CD8-positive, alpha-beta T cell (primary cell): ENCODE measurements at regions of chr9 and their contacts with region 1.

Region 1: DNA sequence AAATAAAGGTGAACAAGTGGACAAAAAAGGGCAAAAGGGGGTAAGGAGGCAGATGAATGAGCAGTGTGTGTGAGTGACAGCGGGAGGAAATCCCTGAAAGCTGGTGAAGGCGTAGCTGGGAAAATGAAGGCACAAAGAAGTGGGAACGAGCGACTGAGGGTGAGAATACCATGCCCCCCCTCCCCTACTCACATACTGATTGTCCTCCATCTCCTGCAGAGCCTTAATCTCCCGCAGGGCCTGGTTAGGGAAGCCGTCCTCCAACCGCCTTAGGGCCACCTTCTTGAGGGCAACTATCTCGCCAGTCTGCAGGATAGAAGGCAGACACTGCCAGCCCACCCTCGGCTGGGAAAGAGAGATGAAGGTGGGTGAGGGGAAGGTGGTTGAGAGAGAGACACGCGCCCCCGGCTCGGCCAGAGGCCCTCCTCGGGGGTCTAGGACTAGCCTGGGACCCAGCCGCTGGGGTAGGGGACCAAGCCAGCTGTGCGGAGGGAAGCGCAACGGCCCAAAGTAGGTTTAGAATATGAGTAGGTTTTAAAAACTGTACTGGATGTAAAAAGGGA is 522 bp downstream of the CDK20 start:
- DNase-seq: no peak
- ATAC-seq: no peak
- H3K4me3 ChIP-seq: peak overlapping the region; percentile 81 to 83
- H3K4me3 Mint-ChIP-seq: peak overlapping the region; percentile 97
- H3K27ac ChIP-seq: peak overlapping the region; percentile 86 to 92
- H3K27ac Mint-ChIP-seq: peak overlapping the region; percentile 99
- H3K4me1 ChIP-seq: peaks cover 10% of the 10 kb centered on the region
- H3K4me1 Mint-ChIP-seq: peaks cover 30% of the 10 kb centered on the region
- H3K27me3 ChIP-seq: no peaks in the 10 kb centered on the region
- H3K27me3 Mint-ChIP-seq: no peaks in the 10 kb centered on the region
- CTCF ChIP-seq: no peak

Region 2: GRCh38 chr9:88322906-88323566 is 349.2 kb after region 1 on chr9:
- CTCF ChIA-PET with region 1: no interaction called
- POLR2A ChIA-PET with region 1: no interaction called
- intact Hi-C with region 1: loop called (anchors 10 kb)
- DNase-seq: peak; percentile 24 to 90 (median 61)
- ATAC-seq: peak; percentile 98
- H3K4me3 ChIP-seq: peak overlapping the region in 1 of 2 experiments; percentile 20
- H3K4me3 Mint-ChIP-seq: peak overlapping the region; percentile 62
- H3K27ac ChIP-seq: peak overlapping the region in 1 of 2 experiments; percentile 40
- H3K27ac Mint-ChIP-seq: peak overlapping the region; percentile 89
- H3K4me1 ChIP-seq: peaks cover 34% of the 10 kb centered on the region
- H3K4me1 Mint-ChIP-seq: peaks cover 38% of the 10 kb centered on the region
- H3K27me3 ChIP-seq: no peaks in the 10 kb centered on the region
- H3K27me3 Mint-ChIP-seq: no peaks in the 10 kb centered on the region
- CTCF ChIP-seq: no peak

Region 3: DNA sequence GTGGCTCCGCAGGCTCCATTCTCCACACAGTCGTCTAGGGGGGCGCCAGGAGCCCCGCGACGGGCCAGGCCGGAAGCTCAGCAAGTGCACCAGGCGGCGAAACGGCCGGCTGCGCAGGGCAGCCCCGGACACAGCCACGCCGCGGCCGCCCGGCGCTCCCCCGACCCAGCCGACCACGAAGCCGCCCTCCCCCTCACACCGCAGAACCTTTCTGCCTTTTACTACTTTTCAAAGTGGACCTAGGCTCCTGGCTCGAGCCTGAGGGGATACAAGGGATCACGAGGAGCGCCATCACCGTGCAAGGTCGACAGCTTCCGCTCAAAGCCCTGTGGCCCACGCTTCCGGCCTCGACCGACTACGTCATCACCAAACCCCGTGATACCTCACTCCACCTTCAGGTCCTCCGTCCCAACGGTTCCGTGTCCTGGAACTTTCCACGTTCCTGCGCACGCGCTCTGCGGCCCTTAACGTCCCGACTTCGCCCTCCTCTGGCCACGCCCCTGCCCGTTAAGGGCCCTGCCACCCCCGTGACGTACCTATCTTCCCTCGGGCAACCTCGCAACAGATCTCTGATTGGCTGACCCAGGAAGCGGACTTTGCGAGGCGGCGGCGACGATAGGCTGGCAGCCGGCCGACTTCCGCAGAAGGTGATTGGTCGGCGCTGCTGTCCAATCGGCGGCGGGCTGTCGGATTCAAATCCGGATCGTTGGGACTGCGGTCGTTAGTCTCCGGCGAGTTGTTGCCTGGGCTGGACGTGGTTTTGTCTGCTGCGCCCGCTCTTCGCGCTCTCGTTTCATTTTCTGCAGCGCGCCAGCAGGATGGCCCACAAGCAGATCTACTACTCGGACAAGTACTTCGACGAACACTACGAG is 1336.9 kb after region 1 on chr9 and contains the start of gene CKS2:
- CTCF ChIA-PET with region 1: no interaction called
- POLR2A ChIA-PET with region 1: no interaction called
- intact Hi-C with region 1: loop called in 1 of 2 experiments (anchors 5 kb)
- DNase-seq: peak; percentile 99 to 100 (median 100)
- ATAC-seq: peak; percentile 92
- H3K4me3 ChIP-seq: peak within 1 kb of the TSS; percentile 50 to 72
- H3K4me3 Mint-ChIP-seq: peak within 1 kb of the TSS; percentile 97
- H3K27ac ChIP-seq: peak within 1 kb of the TSS; percentile 91 to 100
- H3K27ac Mint-ChIP-seq: peak within 1 kb of the TSS; percentile 97
- H3K4me1 ChIP-seq: peaks cover 24% of the 10 kb centered on the region
- H3K4me1 Mint-ChIP-seq: peaks cover 44% of the 10 kb centered on the region
- H3K27me3 ChIP-seq: no peaks in the 10 kb centered on the region
- H3K27me3 Mint-ChIP-seq: no peaks in the 10 kb centered on the region
- CTCF ChIP-seq: no peak
- total RNA-seq, gene CKS2: 8.4 to 9.3 TPM